ENCODE measurements at regions of chr12 and their contacts with region 1.

Region 1: DNA sequence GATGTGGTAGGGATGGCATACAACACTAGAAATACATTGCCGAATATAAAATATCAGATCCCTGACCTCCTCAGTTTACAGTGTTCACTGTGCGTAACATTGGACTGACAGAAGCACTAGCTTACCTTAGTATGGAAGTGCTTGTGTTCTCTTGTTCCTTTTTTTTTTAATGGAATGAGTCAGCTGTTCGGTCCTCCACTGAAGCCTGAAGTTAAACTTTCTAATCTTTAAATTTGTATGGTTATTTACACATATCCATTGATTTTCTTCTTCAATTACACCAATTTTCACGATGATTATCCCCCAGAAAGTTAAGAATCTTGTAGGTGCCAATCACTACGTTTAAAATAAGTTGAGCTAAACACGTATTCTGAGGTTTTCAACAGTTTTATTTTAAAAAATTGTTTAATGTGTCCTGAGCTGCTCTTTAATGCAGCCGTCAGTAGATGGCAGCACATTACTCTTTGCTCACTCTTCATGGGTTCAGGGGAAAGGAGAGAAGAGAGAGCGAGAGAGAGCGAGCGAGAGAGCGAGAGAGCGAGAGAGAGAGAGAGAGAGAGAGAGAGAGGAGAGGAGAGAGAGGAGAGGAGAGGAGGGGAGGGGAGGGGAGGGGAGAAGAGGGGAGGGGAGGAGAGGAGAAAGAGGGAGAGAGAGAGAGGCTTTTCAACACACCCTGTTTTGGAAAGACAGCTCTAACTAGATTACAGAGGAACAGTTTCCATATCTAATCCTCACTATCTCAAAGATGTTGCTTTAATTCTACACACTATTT is 134.7 kb upstream of the SCAF11 start:
- DNase-seq: peak in 1 of 2 donors; percentile 65
- ATAC-seq: peak; percentile 85 to 94 (median 88)
- H3K4me3 ChIP-seq: peak overlapping the region in 3 of 10 donors; percentile 13 to 19 (median 17)
- H3K27ac ChIP-seq: no peak overlapping the region
- H3K4me1 ChIP-seq: peaks cover 0 to 14% (median 5%) of the 10 kb centered on the region in 9 donors
- H3K27me3 ChIP-seq: no peaks in the 10 kb centered on the region
- CTCF ChIP-seq: peak; percentile 37 to 81 (median 58)

Region 2: DNA sequence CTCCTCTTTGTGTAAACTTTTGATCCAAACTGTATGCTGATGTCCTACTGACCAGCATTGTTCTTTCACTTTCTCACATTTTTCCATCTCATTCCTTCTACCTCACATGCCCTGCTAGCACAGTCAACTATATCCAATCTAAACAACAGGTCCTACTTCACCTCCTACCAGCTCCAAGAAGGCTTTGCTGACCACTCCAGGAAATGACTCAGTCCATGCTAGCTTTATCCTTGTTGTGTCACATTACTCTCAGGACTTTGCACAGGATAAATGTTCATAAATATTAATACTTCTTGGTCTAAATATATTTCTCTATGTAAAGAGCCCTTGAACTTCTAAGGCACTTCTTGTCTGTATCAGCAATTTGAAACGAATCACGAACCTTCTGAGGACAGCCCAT is 889.4 kb after region 1 on chr12:
- intact Hi-C with region 1: loop called in 1 of 10 experiments (anchors 10 kb)
- DNase-seq: no peak
- ATAC-seq: no peak
- H3K4me3 ChIP-seq: no peak overlapping the region
- H3K27ac ChIP-seq: no peak overlapping the region
- H3K4me1 ChIP-seq: no peaks in the 10 kb centered on the region
- H3K27me3 ChIP-seq: peaks cover 0 to 3% (median 0%) of the 10 kb centered on the region in 7 donors
- CTCF ChIP-seq: no peak